ENCODE measurements at regions of chr4 and their contacts with region 1.

Region 1: GRCh38 chr4:71009890-71010588 is 16.6 kb downstream of the DCK start:
- DNase-seq: no peak
- H3K4me3 ChIP-seq: no peak overlapping the region
- H3K27ac ChIP-seq: no peak overlapping the region
- H3K4me1 ChIP-seq: peaks cover 0 to 7% (median 2%) of the 10 kb centered on the region in 4 donors
- H3K27me3 ChIP-seq: no peaks in the 10 kb centered on the region
- CTCF ChIP-seq: peak; percentile 49 to 64 (median 62)
- EP300 ChIP-seq: no peak
- POLR2A ChIP-seq: no peak

Region 2: DNA sequence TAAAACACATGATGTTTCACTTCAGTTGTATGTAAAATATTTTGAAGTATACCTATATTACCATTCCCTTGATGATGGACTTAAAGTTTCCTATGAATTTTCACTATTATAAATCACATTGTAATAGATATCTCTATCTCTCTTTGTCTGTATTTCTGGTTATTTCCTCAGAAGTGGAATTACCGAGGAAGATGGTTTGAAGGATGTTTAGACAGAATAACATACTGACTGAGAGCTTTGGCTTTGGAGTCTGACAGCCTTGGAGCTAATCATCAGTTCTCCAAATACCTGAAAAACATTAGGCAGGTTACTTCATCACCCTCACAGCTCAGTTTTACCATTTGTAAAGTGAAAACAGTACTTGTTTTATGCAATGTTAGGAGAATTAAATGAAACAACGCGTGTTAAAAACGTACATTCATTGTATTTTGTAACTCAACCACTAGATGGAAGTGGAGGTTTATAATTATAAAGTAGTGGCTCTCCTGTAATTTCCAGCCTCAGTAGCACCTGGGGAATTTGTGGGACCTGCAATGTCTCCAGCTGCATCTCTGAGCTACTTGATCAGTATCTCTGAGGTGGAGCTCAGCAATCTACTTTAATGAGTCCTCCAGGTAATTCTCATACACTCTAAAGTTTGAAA is 358.1 kb before region 1 on chr4:
- intact Hi-C with region 1: loop called (anchors 2 kb)
- DNase-seq: no peak
- H3K4me3 ChIP-seq: no peak overlapping the region
- H3K27ac ChIP-seq: no peak overlapping the region
- H3K4me1 ChIP-seq: peaks cover 0 to 5% (median 2%) of the 10 kb centered on the region in 4 donors
- H3K27me3 ChIP-seq: no peaks in the 10 kb centered on the region
- CTCF ChIP-seq: peak; percentile 41 to 53 (median 46)
- EP300 ChIP-seq: no peak
- POLR2A ChIP-seq: no peak

Region 3: GRCh38 chr4:70892086-70892769 is 117.8 kb before region 1 on chr4:
- intact Hi-C with region 1: no loop called
- DNase-seq: no peak
- H3K4me3 ChIP-seq: no peak overlapping the region
- H3K27ac ChIP-seq: no peak overlapping the region
- H3K4me1 ChIP-seq: peaks cover 10 to 17% (median 14%) of the 10 kb centered on the region in 4 donors
- H3K27me3 ChIP-seq: no peaks in the 10 kb centered on the region
- CTCF ChIP-seq: no peak
- EP300 ChIP-seq: no peak
- POLR2A ChIP-seq: no peak

Measured in esophagus muscularis mucosa (tissue), 4 donors.